Psoas muscle (tissue), 8 donors: ENCODE measurements at regions of chr2 and their contacts with region 1.

Region 1: DNA sequence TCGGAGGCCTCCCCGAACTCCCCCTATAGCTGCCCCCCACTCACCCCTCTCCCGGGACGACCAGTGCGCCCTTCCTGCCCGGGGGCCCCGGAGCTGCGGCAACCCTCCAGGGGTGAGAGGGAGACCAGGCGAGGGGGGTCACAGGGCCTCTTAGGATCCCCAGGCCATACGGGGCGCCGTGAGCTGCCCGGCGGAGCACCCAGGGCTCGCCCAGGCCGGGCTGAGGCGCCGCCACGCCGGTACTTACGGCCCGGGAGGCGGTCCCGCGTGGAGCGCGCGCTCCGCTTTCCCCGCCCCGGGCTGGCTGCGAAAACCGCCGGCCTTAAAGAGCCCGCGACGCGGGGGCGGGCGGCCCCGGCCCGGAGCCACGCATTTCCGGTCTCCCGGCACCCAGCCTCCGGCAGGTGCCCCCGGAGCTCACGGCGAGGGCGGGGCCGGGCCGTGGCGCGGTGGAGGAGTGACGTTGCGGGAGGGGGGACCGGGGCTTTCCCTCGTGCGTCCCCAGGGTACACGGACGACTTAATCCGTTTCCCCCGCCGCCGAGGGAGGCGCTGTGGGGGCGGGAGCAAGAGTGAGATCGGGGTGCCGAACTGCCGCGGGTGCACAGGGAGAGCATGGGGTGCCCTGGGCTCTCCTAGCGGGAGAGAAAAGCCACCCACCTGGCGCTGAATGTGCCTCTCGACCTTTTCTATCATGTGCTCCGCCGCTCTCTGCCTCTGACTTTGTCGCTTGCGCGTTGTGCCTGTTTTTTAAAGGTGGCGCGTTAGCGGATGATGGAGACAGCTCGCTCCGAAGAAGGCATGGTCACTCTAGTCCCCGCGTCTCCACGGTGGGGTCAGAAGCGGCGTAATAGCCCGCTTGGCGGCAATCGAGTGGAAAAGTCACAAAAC is at the start of gene METTL21A:
- DNase-seq: peak; percentile 88 to 94
- ATAC-seq: peak; percentile 91 to 95 (median 92)
- H3K4me3 ChIP-seq: peak within 1 kb of the TSS; percentile 100
- H3K27ac ChIP-seq: peak within 1 kb of the TSS; percentile 91
- H3K4me1 ChIP-seq: peaks cover 8% of the 10 kb centered on the region
- H3K27me3 ChIP-seq: no peaks in the 10 kb centered on the region
- CTCF ChIP-seq: peak; percentile 49
- total RNA-seq, gene METTL21A: 7.0 to 9.5 (median 8.6) TPM

Region 2: GRCh38 chr2:207529330-207530159 is 95.7 kb before region 1 on chr2 and contains the start of gene CREB1:
- intact Hi-C with region 1: loop called (anchors 1 to 2 kb)
- DNase-seq: peak; percentile 99
- ATAC-seq: peak; percentile 96 to 98 (median 97)
- H3K4me3 ChIP-seq: peak within 1 kb of the TSS; percentile 89
- H3K27ac ChIP-seq: peak within 1 kb of the TSS; percentile 92
- H3K4me1 ChIP-seq: peaks cover 29% of the 10 kb centered on the region
- H3K27me3 ChIP-seq: no peaks in the 10 kb centered on the region
- CTCF ChIP-seq: no peak
- total RNA-seq, gene CREB1: 18.4 to 27.9 (median 22.9) TPM

Region 3: GRCh38 chr2:207710814-207711740 is 85.8 kb after region 1 on chr2 and contains the start of gene CCNYL1:
- intact Hi-C with region 1: loop called (anchors 2 to 5 kb)
- DNase-seq: peak; percentile 98 to 100
- ATAC-seq: peak; percentile 99 to 100 (median 100)
- H3K4me3 ChIP-seq: peak within 1 kb of the TSS; percentile 86
- H3K27ac ChIP-seq: peak within 1 kb of the TSS; percentile 87
- H3K4me1 ChIP-seq: peaks cover 14% of the 10 kb centered on the region
- H3K27me3 ChIP-seq: no peaks in the 10 kb centered on the region
- CTCF ChIP-seq: peak; percentile 32
- total RNA-seq, gene CCNYL1: 6.8 to 9.7 (median 7.6) TPM

Region 4: DNA sequence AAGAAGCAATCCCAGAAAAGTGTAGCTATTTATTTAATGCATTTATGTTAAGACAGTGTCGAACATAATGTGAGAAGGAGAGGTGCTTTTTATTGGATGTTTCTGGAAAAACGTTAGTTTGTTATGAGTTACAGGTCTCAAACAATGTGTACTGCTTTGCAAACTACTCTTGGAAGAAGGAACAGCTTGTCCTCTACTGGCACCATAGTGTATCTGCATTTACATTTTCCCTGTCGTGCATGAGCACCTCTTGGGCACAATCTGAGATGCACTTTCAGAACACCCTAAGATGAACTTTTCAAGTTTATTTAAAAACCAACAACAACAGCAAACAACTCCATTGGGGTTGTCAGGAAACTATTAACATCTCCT is 109.0 kb after region 1 on chr2:
- intact Hi-C with region 1: loop called in 1 of 2 experiments (anchors 5 kb)
- DNase-seq: no peak
- ATAC-seq: peak in 1 of 4 donors; percentile 48
- H3K4me3 ChIP-seq: no peak overlapping the region
- H3K27ac ChIP-seq: no peak overlapping the region
- H3K4me1 ChIP-seq: no peaks in the 10 kb centered on the region
- H3K27me3 ChIP-seq: no peaks in the 10 kb centered on the region
- CTCF ChIP-seq: peak; percentile 42

Region 5: GRCh38 chr2:208025037-208025813 is 400.0 kb after region 1 on chr2 and contains the start of gene PLEKHM3:
- intact Hi-C with region 1: loop called in 1 of 2 experiments (anchors 10 kb)
- DNase-seq: peak; percentile 87 to 92
- ATAC-seq: peak; percentile 97 to 100 (median 99)
- H3K4me3 ChIP-seq: peak within 1 kb of the TSS; percentile 78
- H3K27ac ChIP-seq: peak within 1 kb of the TSS; percentile 82
- H3K4me1 ChIP-seq: peaks cover 3% of the 10 kb centered on the region
- H3K27me3 ChIP-seq: no peaks in the 10 kb centered on the region
- CTCF ChIP-seq: no peak
- total RNA-seq, gene PLEKHM3: 2.2 to 5.7 (median 4.7) TPM

Region 6: DNA sequence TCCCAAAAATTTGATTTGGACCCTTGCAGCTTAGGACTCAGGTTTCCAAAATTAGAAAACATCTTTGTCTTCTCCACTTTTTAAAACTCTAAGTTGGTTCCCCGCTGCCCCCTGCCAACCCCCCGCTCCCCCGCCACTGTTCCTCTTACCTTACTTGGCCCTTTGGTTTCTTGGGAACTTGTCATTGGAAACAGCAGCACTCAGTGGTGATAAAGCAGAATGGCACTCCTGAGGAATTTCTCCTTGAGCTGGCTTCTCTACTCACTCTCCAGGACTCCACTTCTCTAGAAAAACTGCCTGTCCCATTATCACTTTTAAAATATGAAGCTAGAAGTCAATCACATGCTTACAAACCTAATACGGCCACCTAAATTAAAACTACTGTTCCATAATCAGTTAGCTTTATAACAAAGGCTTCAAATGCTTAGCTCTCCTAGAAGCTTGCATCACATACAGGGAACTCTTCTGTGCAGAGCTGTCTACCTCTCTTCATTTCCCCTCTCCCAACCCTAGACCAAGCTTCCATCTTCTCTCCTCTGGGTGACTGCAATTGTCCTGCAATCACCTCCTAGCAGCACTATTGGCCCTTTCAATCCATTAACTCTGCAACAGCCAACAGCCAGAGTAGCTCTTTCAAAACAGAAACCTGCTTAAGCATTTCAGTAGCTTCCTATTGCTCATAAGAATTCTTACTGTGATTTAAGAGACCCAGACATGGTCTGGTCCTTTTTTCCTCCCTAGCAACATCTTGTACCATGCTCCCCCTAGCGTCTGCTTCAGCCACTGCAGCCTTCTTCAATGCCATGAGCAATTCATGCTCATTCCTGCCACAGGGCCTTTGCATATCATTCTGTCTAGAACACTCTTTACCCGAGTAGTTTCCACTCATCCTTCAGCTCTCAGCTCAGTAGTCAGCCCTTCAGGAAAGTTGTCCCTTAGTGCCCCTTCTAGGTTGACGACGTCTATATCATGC is 415.2 kb after region 1 on chr2:
- intact Hi-C with region 1: loop called in 1 of 2 experiments (anchors 5 kb)
- DNase-seq: peak; percentile 54 to 71
- ATAC-seq: peak; percentile 60 to 84 (median 80)
- H3K4me3 ChIP-seq: no peak overlapping the region
- H3K27ac ChIP-seq: no peak overlapping the region
- H3K4me1 ChIP-seq: no peaks in the 10 kb centered on the region
- H3K27me3 ChIP-seq: no peaks in the 10 kb centered on the region
- CTCF ChIP-seq: peak; percentile 70

Region 7: GRCh38 chr2:208254871-208255556 is 629.8 kb after region 1 on chr2 and contains the start of gene IDH1:
- intact Hi-C with region 1: loop called in 1 of 2 experiments (anchors 10 kb)
- DNase-seq: peak; percentile 97 to 98
- ATAC-seq: peak; percentile 97 to 98 (median 98)
- H3K4me3 ChIP-seq: peak within 1 kb of the TSS; percentile 81
- H3K27ac ChIP-seq: peak within 1 kb of the TSS; percentile 66
- H3K4me1 ChIP-seq: peaks cover 18% of the 10 kb centered on the region
- H3K27me3 ChIP-seq: no peaks in the 10 kb centered on the region
- CTCF ChIP-seq: no peak
- total RNA-seq, gene IDH1: 9.7 to 18.0 (median 13.3) TPM